OCI-LY7 (cell line): ENCODE measurements at regions of chr14 and their contacts with region 1.

Region 1: GRCh38 chr14:22766456-22767322 is at the start of gene OXA1L:
- DNase-seq: peak; percentile 99
- H3K4me3 ChIP-seq: peak within 1 kb of the TSS; percentile 95
- H3K27ac ChIP-seq: peak within 1 kb of the TSS; percentile 57
- H3K4me1 ChIP-seq: peaks cover 24% of the 10 kb centered on the region
- CTCF ChIP-seq: no peak
- total RNA-seq, gene OXA1L: 128 and 153 TPM in 2 replicates

Region 2: GRCh38 chr14:21868442-21869046 is 898.1 kb before region 1 on chr14:
- CTCF ChIA-PET with region 1: no interaction called
- POLR2A ChIA-PET with region 1: no interaction called
- intact Hi-C with region 1: no loop called
- DNase-seq: peak; percentile 69
- H3K4me3 ChIP-seq: no peak overlapping the region
- H3K27ac ChIP-seq: no peak overlapping the region
- H3K4me1 ChIP-seq: no peaks in the 10 kb centered on the region
- CTCF ChIP-seq: peak; percentile 94

Region 3: DNA sequence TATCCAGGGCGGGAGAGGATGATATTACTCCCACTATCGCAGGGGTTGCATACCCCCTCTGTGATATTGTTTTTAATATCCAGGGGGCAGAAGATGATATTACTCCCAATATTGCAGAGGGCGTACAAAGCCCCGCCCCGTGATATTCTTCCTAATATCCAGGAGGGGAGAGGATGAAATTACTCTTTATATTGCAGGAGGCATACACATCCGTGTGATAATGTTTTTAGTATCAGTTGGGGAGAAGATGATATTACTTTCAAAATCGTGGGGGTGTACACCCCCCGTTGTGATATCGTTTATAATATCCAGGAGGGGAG is 53.1 kb before region 1 on chr14:
- CTCF ChIA-PET with region 1: no interaction called
- POLR2A ChIA-PET with region 1: no interaction called
- intact Hi-C with region 1: loop called (anchors 5 kb)
- DNase-seq: no peak
- H3K4me3 ChIP-seq: peak overlapping the region; percentile 62
- H3K27ac ChIP-seq: no peak overlapping the region
- H3K4me1 ChIP-seq: peaks cover 13% of the 10 kb centered on the region
- CTCF ChIP-seq: no peak

Region 4: GRCh38 chr14:22748631-22749068 is 18.0 kb before region 1 on chr14:
- CTCF ChIA-PET with region 1: interaction called, 5 read pairs
- POLR2A ChIA-PET with region 1: interaction called, 31 read pairs
- intact Hi-C with region 1: loop called (anchors 1 kb)
- DNase-seq: peak; percentile 67
- H3K4me3 ChIP-seq: peak overlapping the region; percentile 46
- H3K27ac ChIP-seq: peak overlapping the region; percentile 73
- H3K4me1 ChIP-seq: peaks cover 29% of the 10 kb centered on the region
- CTCF ChIP-seq: peak; percentile 64